GM23248 (cell line): ENCODE measurements at regions of chr11 and their contacts with region 1.

Region 1: GRCh38 chr11:27158722-27159679 is 118.4 kb downstream of the BBOX1 start:
- DNase-seq: peak; percentile 92
- H3K4me3 ChIP-seq: no peak overlapping the region
- H3K27ac ChIP-seq: no peak overlapping the region
- H3K4me1 ChIP-seq: peaks cover 5% of the 10 kb centered on the region
- H3K27me3 ChIP-seq: no peaks in the 10 kb centered on the region

Region 2: DNA sequence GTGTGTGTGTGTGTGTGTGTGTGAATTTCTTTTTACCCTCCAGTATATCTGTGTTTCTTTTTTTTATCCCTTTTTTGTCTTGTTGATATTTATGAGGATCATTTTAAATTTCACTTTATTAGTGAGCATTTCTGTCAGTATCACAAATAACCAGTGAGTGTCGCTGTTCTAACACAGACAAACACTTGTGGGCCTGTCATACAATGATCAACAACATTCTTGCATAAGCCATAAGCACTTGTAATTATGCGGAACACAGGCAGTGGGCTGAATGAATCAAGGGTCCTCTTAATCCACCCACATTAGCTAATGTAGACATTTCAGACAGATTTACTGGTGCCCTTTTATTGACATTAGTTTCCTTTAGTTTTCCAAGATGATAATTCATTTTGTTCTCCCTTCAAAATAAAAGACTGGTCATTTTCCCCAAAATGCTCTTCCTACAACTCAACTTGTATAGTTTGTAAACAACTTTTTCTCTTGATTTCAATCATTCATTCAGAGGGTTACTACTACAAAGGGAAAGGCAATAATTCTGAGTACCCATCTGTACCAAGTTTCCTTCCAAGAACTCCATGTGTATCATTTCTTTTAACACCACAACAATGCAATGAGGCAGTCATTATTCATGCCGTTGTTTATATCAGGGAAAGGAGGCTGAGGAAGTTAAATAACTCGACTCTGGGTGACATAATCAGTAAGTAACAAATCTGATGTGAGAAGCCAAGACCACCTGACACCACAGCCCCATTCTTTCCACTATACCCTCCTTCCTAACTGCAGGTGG is 861.6 kb before region 1 on chr11:
- in situ Hi-C with region 1: loop called (anchors 10 kb)
- DNase-seq: peak; percentile 79
- H3K4me3 ChIP-seq: no peak overlapping the region
- H3K27ac ChIP-seq: no peak overlapping the region
- H3K4me1 ChIP-seq: no peaks in the 10 kb centered on the region
- H3K27me3 ChIP-seq: no peaks in the 10 kb centered on the region

Region 3: GRCh38 chr11:26753723-26754504 is 405.1 kb before region 1 on chr11:
- in situ Hi-C with region 1: loop called (anchors 10 kb)
- DNase-seq: peak; percentile 83
- H3K4me3 ChIP-seq: no peak overlapping the region
- H3K27ac ChIP-seq: no peak overlapping the region
- H3K4me1 ChIP-seq: no peaks in the 10 kb centered on the region
- H3K27me3 ChIP-seq: no peaks in the 10 kb centered on the region

Region 4: DNA sequence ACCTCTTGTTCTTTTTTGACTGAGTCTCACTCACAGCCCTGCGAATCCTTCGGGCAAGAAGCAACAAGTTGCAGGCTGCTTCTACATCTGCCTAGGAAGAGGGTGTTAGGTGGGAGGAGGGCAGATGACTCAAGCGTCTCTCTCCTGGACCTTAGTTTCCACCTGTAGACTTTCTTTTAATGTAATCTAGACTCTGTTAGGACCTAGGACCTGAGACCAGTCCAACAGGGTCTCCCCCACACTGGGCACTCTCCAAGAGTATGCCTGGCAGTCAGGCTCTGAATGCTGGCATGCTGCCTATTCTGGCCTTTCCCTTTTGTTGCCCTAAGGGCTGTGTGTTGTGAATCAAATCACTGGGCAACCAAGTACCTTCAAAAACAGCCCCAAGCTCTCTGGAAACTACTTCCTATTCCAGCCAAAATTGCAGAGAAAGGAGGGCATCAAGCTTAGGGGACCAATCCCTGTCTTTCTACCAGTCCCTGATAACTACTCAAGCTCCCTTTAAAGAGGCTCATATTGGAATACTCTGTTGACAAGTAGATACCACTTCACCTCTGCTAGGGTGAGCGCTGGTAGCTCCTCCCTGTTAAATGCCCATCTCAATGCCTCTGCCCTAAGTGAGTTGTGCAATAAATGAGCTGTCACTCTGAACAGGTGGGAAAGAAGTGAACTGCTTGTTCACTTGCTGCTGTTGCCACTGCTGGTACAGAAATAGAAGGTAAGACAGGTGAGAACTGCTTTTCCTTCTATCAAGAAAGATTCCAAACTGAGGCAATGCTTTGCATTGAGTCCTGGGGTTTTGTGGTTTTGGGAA is 118.5 kb before region 1 on chr11 and contains the start of gene BBOX1:
- in situ Hi-C with region 1: no loop called
- DNase-seq: no peak
- H3K4me3 ChIP-seq: no peak within 1 kb of the TSS
- H3K27ac ChIP-seq: no peak within 1 kb of the TSS
- H3K4me1 ChIP-seq: no peaks in the 10 kb centered on the region
- H3K27me3 ChIP-seq: no peaks in the 10 kb centered on the region
- total RNA-seq, gene BBOX1: not detected in 2 replicates